Activated CD4-positive, alpha-beta T cell treated with anti-CD3 and anti-CD28 coated beads for 36 hours (primary cell): ENCODE measurements at regions of chr1 and their contacts with region 1.

Region 1: DNA sequence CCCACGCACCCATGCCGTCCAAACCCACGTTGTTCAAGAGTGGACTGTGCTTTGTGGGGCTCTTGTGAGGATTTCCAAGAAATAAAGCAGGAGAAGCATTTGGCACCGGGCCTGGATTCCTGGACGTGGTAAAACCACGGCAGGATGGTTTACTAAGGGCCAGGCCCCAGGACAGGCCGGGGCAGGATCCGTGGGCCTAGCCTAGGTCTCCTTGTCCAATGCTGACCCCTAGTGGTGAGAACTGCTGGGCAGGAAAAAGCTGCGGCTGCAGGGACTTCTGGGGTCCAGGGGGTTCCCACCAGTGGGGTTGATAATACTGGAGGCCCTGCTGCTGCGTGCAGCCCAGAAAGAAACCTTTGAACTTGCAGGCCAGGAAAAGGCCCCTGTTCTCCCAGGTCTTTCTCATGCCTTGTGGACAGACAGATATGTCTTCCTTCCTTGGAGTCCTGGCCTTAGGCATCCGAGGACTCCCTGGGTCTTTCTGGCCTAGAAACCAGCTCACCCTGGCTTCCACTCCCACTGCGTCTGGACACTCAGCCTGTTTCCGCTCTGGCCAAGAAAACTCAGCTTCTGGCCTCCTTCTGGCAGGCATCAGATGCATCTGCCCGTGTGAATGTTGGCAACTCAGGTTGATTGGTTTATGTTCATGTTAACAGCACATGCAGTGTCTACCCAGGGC is 106.9 kb upstream of the TMEM51 start:
- DNase-seq: peak; percentile 76
- ATAC-seq: peak; percentile 44
- H3K4me3 Mint-ChIP-seq: no peak overlapping the region
- H3K27ac Mint-ChIP-seq: no peak overlapping the region
- H3K4me1 Mint-ChIP-seq: no peaks in the 10 kb centered on the region
- H3K27me3 Mint-ChIP-seq: no peaks in the 10 kb centered on the region

Region 2: GRCh38 chr1:14778898-14779865 is 267.4 kb before region 1 on chr1:
- CTCF ChIA-PET with region 1: interaction called, 3 read pairs
- POLR2A ChIA-PET with region 1: no interaction called
- intact Hi-C with region 1: loop called (anchors 5 kb)
- DNase-seq: peak; percentile 62
- ATAC-seq: peak; percentile 16
- H3K4me3 Mint-ChIP-seq: no peak overlapping the region
- H3K27ac Mint-ChIP-seq: no peak overlapping the region
- H3K4me1 Mint-ChIP-seq: no peaks in the 10 kb centered on the region
- H3K27me3 Mint-ChIP-seq: peaks cover 3% of the 10 kb centered on the region